ENCODE measurements at regions of chr1 and their contacts with region 1.

Region 1: DNA sequence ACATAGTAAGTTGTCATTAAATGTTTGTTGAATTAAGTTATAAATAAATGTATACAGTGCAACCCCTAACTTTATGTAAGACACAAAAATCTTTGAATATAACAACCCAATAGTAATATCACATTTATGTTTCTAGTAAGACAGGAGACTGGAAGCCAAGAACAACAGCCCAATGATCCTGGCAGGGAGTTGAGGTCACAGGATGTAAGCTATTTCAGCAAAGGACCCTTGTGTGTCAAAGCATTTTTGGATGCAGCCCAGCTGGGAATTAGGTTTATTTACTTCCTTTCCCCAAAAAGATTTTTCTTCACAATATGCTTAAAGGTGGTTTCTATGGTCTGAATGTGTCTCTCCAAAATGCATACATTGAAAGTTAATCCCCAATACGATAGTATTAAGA is 34.0 kb upstream of the ABCA4 start:
- DNase-seq: peak in 1 of 2 donors; percentile 68
- ATAC-seq: peak in 5 of 8 donors; percentile 48 to 83 (median 55)
- H3K4me3 ChIP-seq: no peak overlapping the region
- H3K27ac ChIP-seq: peak overlapping the region in 3 of 10 donors; percentile 4 to 54 (median 51)
- H3K4me1 ChIP-seq: peaks cover 0 to 15% (median 0%) of the 10 kb centered on the region in 9 donors
- H3K27me3 ChIP-seq: no peaks in the 10 kb centered on the region
- CTCF ChIP-seq: no peak

Region 2: DNA sequence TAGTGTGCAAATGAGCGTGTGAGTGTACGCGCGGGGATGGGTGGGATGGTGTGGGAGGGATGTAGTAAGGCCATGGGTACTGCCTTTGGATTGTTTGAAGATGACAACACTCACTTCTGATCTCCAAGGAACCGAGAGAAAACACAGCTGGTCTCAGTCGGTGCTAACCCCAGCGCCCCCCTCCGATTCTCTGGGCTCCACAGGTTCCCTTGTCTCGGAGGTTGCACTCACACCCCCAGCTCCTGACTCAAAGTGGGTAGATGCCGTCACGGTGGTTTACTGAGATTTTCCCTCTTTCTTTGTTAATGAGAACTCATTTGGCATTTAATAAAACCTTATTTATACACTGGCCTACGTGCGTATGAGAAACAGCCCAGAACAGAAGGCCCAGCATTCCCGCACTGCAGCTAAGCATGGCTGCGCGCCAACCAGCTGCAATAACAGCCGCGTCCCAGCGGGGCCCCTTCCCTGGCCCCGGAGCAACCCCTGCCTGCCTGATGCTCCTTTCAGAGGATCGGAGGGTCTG is 59.8 kb before region 1 on chr1:
- intact Hi-C with region 1: loop called in 1 of 10 experiments (anchors 5 kb)
- DNase-seq: peak; percentile 87 to 90
- ATAC-seq: peak; percentile 77 to 87 (median 84)
- H3K4me3 ChIP-seq: peak overlapping the region in 3 of 10 donors; percentile 5 to 23 (median 8)
- H3K27ac ChIP-seq: peak overlapping the region; percentile 67 to 90 (median 83)
- H3K4me1 ChIP-seq: peaks cover 13 to 92% (median 65%) of the 10 kb centered on the region in 9 donors
- H3K27me3 ChIP-seq: peaks cover 0 to 29% (median 0%) of the 10 kb centered on the region in 7 donors
- CTCF ChIP-seq: peak in 1 of 9 donors; percentile 15